Vagina (tissue), 2 donors: ENCODE measurements at regions of chr20 and their contacts with region 1.

Region 1: GRCh38 chr20:45436732-45437391 is 20.9 kb downstream of the PIGT start:
- DNase-seq: no peak
- H3K4me3 ChIP-seq: peak overlapping the region; percentile 51 to 54
- H3K27ac ChIP-seq: peak overlapping the region; percentile 78
- H3K4me1 ChIP-seq: peaks cover 8% of the 10 kb centered on the region
- H3K27me3 ChIP-seq: no peaks in the 10 kb centered on the region
- CTCF ChIP-seq: peak; percentile 79 to 98 (median 94)
- POLR2A ChIP-seq: no peak

Region 2: DNA sequence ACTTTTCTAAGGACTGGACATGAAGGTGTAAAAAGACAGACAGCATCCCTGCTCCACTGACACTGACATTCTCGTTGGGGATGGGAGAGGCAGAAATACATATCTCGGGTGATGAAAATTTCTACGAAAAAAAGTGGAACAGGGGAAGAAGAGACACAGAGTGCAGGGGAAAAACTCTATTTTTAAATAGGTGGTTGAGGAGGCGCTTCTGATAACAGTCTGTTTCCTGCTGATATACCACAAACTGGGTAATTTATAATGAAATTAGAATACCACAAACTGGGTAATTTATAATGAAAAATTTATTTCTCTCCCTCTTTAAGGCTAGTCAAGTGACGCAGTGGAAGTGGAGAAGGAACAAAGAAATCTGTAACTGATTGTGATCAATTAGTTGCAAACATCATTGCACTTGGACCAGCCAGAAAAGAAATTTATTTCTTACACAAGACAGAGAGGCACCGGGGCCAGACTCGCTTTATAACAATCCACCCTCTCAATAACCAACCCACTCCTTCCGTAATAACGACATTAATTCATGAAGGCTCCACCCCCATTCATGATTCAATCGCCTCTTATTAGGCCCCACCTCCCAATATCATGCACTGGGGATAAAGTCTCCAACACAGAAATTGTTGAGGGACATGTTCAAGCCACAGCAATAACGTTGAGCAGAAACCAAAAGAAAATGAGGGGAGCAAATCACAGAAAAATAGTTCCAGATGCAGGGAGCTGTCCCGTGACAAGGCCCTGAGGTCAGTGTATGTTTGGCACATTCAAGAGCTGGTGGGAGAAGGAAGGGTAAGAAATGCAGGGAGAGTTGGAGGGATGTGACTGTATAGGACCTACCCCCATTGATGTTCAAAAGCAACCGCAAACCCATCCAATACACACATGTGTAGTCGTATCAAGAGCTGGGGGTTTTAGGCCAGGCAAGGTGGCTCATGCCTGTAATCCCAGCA is 1985.7 kb before region 1 on chr20:
- intact Hi-C with region 1: loop called (anchors 5 kb)
- DNase-seq: no peak
- H3K4me3 ChIP-seq: no peak overlapping the region
- H3K27ac ChIP-seq: no peak overlapping the region
- H3K4me1 ChIP-seq: no peaks in the 10 kb centered on the region
- H3K27me3 ChIP-seq: no peaks in the 10 kb centered on the region
- CTCF ChIP-seq: no peak
- POLR2A ChIP-seq: no peak

Region 3: GRCh38 chr20:45318948-45319347 is 117.9 kb before region 1 on chr20:
- intact Hi-C with region 1: loop called (anchors 2 kb)
- DNase-seq: no peak
- H3K4me3 ChIP-seq: no peak overlapping the region
- H3K27ac ChIP-seq: no peak overlapping the region
- H3K4me1 ChIP-seq: peaks cover 8% of the 10 kb centered on the region
- H3K27me3 ChIP-seq: no peaks in the 10 kb centered on the region
- CTCF ChIP-seq: no peak
- POLR2A ChIP-seq: no peak

Region 4: GRCh38 chr20:45373353-45374100 is 63.3 kb before region 1 on chr20:
- intact Hi-C with region 1: loop called (anchors 5 kb)
- DNase-seq: peak in 1 of 2 donors; percentile 88
- H3K4me3 ChIP-seq: peak overlapping the region; percentile 45 to 46
- H3K27ac ChIP-seq: peak overlapping the region; percentile 83
- H3K4me1 ChIP-seq: peaks cover 16% of the 10 kb centered on the region
- H3K27me3 ChIP-seq: no peaks in the 10 kb centered on the region
- CTCF ChIP-seq: peak; percentile 49 to 94 (median 76)
- POLR2A ChIP-seq: no peak

Region 5: DNA sequence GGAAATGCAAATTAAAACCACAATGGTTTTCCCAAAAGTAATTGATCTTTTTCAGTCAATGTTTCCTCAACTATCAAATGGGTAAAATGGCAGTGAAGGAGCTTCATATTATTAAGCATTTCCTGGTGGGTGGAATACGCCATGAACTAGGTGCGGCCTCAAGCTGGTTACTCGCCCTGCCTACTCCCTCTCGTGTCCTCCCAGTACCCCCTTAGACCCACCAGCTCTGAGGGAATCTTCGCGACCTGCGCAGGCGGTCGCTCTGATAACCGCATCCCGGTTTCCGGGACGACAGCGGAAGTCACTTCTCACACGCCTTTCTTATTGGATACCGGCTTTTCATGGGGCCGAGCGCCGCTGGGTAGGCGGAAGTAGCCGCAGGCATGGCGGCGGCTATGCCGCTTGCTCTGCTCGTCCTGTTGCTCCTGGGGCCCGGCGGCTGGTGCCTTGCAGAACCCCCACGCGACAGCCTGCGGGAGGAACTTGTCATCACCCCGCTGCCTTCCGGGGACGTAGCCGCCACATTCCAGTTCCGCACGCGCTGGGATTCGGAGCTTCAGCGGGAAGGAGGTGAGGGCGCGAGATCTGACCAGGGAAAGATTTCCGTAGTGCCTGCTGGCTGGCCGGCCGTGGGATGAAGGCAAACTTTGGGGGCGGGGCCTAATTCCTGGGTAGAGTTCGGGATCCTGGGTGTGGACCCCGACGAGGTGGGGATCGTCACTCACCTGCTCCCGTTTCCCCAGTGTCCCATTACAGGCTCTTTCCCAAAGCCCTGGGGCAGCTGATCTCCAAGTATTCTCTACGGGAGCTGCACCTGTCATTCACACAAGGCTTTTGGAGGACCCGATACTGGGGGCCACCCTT is 20.9 kb before region 1 on chr20 and contains the start of gene PIGT:
- intact Hi-C with region 1: no loop called
- DNase-seq: no peak
- H3K4me3 ChIP-seq: peak within 1 kb of the TSS; percentile 93 to 95
- H3K27ac ChIP-seq: peak within 1 kb of the TSS; percentile 68
- H3K4me1 ChIP-seq: peaks cover 37% of the 10 kb centered on the region
- H3K27me3 ChIP-seq: no peaks in the 10 kb centered on the region
- CTCF ChIP-seq: no peak
- POLR2A ChIP-seq: no peak
- total RNA-seq, gene PIGT: 81.0 TPM

Region 6: DNA sequence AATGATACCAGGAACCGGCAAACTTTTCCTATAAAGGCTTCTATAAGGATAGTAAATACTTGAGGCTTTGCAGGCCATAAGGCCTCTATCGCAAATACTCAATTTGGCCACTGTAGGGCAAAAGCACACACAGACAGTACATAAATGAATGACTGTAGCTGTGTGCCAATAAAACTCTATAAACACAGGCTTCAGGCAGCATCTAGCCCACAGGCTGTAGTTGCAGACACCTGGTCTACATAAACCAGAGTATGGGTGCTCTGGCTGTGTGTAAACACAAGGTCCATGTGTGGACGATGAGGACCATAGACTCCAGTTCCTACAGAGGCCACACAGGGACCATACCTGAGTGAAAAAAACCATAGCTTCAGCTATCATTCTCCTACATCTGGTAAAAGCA is 1867.4 kb after region 1 on chr20:
- intact Hi-C with region 1: no loop called
- DNase-seq: no peak
- H3K4me3 ChIP-seq: no peak overlapping the region
- H3K27ac ChIP-seq: peak overlapping the region; percentile 47
- H3K4me1 ChIP-seq: peaks cover 16% of the 10 kb centered on the region
- H3K27me3 ChIP-seq: no peaks in the 10 kb centered on the region
- CTCF ChIP-seq: no peak
- POLR2A ChIP-seq: no peak